A549 (cell line): ENCODE measurements at regions of chr9 and their contacts with region 1.

Region 1: DNA sequence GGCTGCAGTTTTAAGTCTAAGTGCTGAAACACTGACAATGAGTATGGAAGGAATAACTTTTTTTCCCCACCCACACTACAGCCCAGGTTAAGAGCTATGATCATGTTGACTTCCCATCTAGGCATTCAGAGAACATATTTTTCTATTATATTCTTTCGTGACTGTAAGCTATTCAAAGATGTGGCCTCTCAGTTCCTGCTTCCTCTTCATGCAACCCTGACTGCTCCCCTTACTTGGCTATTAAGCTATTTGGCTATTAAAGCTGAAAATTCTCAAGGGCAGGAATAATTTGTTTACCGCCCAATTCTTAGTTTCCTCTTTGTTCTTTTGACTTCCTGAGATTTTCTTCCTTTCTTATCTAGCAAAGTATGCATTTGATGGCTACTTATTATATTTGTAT is 18.6 kb upstream of the ALDH1A1 start:
- DNase-seq: no peak
- ATAC-seq: no peak
- H3K4me3 ChIP-seq: no peak overlapping the region
- H3K27ac ChIP-seq: peak overlapping the region; percentile 2 to 3; a peak in 2 of 6 replicates
- H3K4me1 ChIP-seq: no peaks in the 10 kb centered on the region
- CTCF ChIP-seq: no peak
- EP300 ChIP-seq: no peak
- POLR2A ChIP-seq: no peak
- RAD21 ChIP-seq: no peak

Region 2: GRCh38 chr9:72960446-72960845 is 11.0 kb before region 1 on chr9:
- CTCF ChIA-PET with region 1: interaction called, 11 read pairs
- POLR2A ChIA-PET with region 1: no interaction called
- DNase-seq: peak in 1 of 2 experiments; percentile 70
- ATAC-seq: peak; percentile 76 to 80; a peak in 5 of 6 replicates
- H3K4me3 ChIP-seq: no peak overlapping the region
- H3K27ac ChIP-seq: peak overlapping the region; percentile 69 to 80
- H3K4me1 ChIP-seq: peaks cover 39% of the 10 kb centered on the region
- CTCF ChIP-seq: peak; percentile 39; the same call in 2 of the 3 replicates
- EP300 ChIP-seq: no peak
- POLR2A ChIP-seq: no peak
- RAD21 ChIP-seq: peak; percentile 51 to 66

Region 3: DNA sequence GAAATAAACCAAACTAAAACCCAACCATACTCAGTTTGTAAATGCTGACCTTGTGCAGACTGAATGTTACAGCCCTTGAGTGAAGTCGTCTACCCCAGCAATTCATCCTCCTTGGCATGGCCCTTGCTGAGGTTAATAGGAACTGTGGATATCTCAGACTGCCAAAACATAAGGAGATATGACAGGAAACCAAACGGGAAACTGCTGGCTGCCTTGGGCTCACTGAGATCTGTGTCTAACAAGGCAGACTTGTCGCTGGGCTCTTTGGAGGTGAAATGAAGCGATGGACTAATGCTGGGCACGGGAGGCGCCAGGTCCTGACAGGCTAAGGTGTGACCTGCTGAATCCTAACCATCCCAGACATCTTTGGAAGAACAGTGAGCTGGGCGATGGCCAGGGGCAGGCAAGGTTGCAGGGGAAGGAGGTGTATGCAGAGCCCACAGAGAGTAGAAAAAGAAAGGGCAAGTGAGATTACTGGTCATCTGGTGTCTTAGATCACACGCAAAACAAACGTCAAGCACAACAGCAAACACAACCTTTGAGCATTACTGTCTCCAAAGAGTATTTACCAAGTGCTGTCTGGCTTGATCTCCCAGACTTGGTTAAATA is 26.1 kb after region 1 on chr9:
- CTCF ChIA-PET with region 1: no interaction called
- POLR2A ChIA-PET with region 1: no interaction called
- DNase-seq: peak; percentile 25 to 98
- ATAC-seq: peak; percentile 93
- H3K4me3 ChIP-seq: peak overlapping the region; percentile 31
- H3K27ac ChIP-seq: peak overlapping the region; percentile 95 to 98
- H3K4me1 ChIP-seq: peaks cover 57% of the 10 kb centered on the region
- CTCF ChIP-seq: no peak
- EP300 ChIP-seq: peak; percentile 98 to 99
- POLR2A ChIP-seq: no peak; the same call in 1 of the 2 replicates
- RAD21 ChIP-seq: peak; percentile 41 to 50; a peak in 4 of 5 replicates